Heart right ventricle (tissue), 16 donors: ENCODE measurements at regions of chr2 and their contacts with region 1.

Region 1: GRCh38 chr2:207529330-207530159 is at the start of gene CREB1:
- DNase-seq: peak; percentile 98 to 100
- ATAC-seq: peak; percentile 96 to 98 (median 96)
- H3K4me3 ChIP-seq: peak within 1 kb of the TSS; percentile 68 to 98 (median 83)
- H3K27ac ChIP-seq: peak within 1 kb of the TSS; percentile 96 to 100 (median 98)
- H3K4me1 ChIP-seq: peaks cover 7 to 61% (median 49%) of the 10 kb centered on the region in 9 donors
- H3K27me3 ChIP-seq: no peaks in the 10 kb centered on the region
- CTCF ChIP-seq: peak in 3 of 9 donors; percentile 23 to 36 (median 35)
- total RNA-seq, gene CREB1: 36.8 to 62.2 (median 45.7) TPM

Region 2: GRCh38 chr2:207133820-207134519 is 395.6 kb before region 1 on chr2:
- intact Hi-C with region 1: no loop called
- DNase-seq: peak; percentile 56 to 88
- ATAC-seq: peak; percentile 93 to 98 (median 96)
- H3K4me3 ChIP-seq: peak overlapping the region in 4 of 10 donors; percentile 5 to 32 (median 18)
- H3K27ac ChIP-seq: peak overlapping the region; percentile 76 to 94 (median 87)
- H3K4me1 ChIP-seq: peaks cover 40 to 100% (median 96%) of the 10 kb centered on the region in 9 donors
- H3K27me3 ChIP-seq: no peaks in the 10 kb centered on the region
- CTCF ChIP-seq: no peak

Region 3: DNA sequence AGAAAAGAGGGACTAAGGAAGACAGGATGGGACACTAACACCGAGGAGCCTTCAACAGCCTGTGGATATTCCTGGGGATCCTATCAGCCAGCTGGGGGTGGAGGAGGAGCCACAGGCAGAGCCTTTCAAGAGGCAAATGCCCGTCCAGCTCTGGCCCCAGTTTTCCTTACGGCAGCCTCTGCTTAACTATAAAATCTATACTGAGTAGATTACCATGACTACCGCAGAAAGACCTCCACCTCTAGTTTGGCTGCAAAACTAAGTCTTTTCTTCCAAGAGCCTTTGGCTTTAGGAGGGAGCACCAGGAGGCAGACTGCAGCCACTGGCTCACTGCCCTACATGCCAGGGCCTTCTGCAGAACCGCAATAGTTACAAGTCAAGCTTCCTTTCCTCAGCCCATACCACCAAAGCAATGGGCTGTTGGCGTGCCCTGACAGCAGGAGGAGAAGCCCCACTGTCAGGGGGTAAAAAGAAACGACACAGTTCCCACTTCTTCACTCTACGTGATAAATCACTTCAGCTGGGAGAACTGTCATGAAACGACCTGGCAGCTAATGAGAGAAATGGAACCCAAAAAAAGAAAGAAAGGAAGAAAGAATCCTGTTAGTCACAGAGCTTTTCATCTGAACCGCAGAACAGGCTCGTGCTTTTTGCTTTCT is 24.9 kb before region 1 on chr2:
- intact Hi-C with region 1: loop called in 1 of 10 experiments (anchors 2 kb)
- DNase-seq: peak; percentile 24 to 34
- ATAC-seq: peak in 6 of 8 donors; percentile 25 to 65 (median 54)
- H3K4me3 ChIP-seq: no peak overlapping the region
- H3K27ac ChIP-seq: peak overlapping the region; percentile 14 to 79 (median 67)
- H3K4me1 ChIP-seq: peaks cover 12 to 71% (median 44%) of the 10 kb centered on the region in 9 donors
- H3K27me3 ChIP-seq: no peaks in the 10 kb centered on the region
- CTCF ChIP-seq: peak in 3 of 9 donors; percentile 17 to 26 (median 23)

Region 4: DNA sequence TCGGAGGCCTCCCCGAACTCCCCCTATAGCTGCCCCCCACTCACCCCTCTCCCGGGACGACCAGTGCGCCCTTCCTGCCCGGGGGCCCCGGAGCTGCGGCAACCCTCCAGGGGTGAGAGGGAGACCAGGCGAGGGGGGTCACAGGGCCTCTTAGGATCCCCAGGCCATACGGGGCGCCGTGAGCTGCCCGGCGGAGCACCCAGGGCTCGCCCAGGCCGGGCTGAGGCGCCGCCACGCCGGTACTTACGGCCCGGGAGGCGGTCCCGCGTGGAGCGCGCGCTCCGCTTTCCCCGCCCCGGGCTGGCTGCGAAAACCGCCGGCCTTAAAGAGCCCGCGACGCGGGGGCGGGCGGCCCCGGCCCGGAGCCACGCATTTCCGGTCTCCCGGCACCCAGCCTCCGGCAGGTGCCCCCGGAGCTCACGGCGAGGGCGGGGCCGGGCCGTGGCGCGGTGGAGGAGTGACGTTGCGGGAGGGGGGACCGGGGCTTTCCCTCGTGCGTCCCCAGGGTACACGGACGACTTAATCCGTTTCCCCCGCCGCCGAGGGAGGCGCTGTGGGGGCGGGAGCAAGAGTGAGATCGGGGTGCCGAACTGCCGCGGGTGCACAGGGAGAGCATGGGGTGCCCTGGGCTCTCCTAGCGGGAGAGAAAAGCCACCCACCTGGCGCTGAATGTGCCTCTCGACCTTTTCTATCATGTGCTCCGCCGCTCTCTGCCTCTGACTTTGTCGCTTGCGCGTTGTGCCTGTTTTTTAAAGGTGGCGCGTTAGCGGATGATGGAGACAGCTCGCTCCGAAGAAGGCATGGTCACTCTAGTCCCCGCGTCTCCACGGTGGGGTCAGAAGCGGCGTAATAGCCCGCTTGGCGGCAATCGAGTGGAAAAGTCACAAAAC is 95.7 kb after region 1 on chr2 and contains the start of gene METTL21A:
- intact Hi-C with region 1: loop called in 7 of 10 experiments (anchors 1 to 10 kb)
- DNase-seq: peak; percentile 87 to 91
- ATAC-seq: peak; percentile 89 to 96 (median 93)
- H3K4me3 ChIP-seq: peak within 1 kb of the TSS; percentile 52 to 99 (median 90)
- H3K27ac ChIP-seq: peak within 1 kb of the TSS; percentile 61 to 99 (median 94)
- H3K4me1 ChIP-seq: peaks cover 0 to 43% (median 25%) of the 10 kb centered on the region in 9 donors
- H3K27me3 ChIP-seq: no peaks in the 10 kb centered on the region
- CTCF ChIP-seq: peak; percentile 23 to 55 (median 44)
- total RNA-seq, gene METTL21A: 10.0 to 22.5 (median 12.9) TPM

Region 5: GRCh38 chr2:207734264-207734635 is 204.7 kb after region 1 on chr2:
- intact Hi-C with region 1: loop called in 1 of 10 experiments (anchors 10 kb)
- DNase-seq: no peak
- ATAC-seq: peak in 3 of 8 donors; percentile 52 to 74 (median 74)
- H3K4me3 ChIP-seq: no peak overlapping the region
- H3K27ac ChIP-seq: no peak overlapping the region
- H3K4me1 ChIP-seq: no peaks in the 10 kb centered on the region
- H3K27me3 ChIP-seq: no peaks in the 10 kb centered on the region
- CTCF ChIP-seq: peak in 8 of 9 donors; percentile 10 to 64 (median 42)